KBM-7 (cell line): ENCODE measurements at regions of chr2 and their contacts with region 1.

Region 1: GRCh38 chr2:108621087-108621559 is 86.9 kb downstream of the LIMS1 start:
- DNase-seq: peak; percentile 67

Region 2: DNA sequence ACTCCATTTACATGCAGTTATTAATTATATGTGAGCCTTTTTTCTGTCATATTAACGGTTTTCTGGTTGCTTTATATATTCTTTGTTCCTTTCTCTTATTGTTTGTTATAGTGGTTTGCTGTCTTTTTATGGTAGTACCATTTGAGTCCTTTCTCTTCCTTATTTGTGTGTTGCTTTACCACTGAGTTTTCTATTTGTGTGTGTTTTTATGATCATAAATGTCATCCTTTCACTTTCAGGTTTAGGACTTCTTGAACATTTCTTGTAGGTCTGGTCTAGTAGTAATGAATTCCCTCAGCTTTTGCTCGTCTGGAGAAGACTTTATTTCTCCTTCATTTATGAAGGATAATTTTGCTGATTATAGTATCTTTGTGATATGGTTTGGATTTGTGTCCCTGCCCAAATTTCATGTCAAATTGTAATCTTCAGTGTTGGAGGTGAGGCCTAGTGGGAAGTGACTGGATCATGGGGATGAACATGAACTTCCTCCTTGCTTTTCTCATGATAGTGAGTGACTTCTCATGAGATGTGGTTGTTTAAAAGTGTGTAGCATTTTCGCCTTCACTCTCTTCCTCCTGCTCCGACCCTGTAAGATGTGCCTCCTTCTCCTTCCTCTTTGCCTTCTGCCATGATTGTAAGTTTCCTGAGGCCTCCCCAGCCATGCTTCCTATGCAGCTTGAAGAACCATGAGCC is 160.6 kb before region 1 on chr2:
- in situ Hi-C with region 1: no loop called
- DNase-seq: no peak

Region 3: DNA sequence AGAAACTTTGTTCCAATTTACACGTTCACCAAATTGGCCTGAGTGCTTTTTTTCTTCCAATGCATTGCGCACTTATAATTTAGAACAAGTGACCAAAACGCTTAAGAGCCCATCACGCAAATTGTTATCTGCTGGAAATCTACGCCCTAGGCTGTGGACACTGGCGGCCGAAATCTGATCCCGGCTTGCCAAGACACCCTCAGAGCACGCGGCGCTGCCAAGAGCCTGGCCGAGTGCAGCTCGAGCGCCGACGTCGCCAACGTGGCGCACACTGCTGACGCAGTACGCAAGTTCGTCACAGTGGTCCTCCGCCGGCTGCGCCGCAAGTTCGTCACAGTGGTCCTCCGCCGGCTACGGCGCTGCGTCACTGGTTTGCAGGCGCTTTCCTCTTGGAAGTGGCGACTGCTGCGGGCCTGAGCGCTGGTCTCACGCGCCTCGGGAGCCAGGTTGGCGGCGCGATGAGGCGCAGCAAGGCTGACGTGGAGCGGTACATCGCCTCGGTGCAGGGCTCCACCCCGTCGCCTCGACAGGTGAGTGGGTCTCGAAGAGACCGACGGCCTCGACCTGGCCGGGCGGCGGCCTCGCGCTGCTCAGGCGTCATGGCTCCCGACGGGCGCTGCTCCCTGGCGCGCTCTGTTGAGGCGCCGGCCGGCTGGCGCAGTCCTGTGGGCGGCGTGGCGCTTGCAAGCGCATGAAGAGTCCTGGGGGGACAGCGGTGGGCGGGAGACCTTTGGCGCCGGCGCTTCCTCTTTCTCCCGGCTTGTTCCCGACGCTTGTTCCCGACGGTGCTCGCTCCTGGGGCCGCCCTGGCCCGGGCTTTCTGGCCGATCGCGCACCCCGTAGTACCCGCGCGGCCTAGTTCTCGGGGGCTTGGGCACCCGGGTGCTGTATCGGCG is 98.3 kb after region 1 on chr2 and contains the start of gene RANBP2:
- in situ Hi-C with region 1: loop called (anchors 25 kb)
- DNase-seq: peak; percentile 94